ENCODE measurements at regions of chr2 and their contacts with region 1.

Region 1: DNA sequence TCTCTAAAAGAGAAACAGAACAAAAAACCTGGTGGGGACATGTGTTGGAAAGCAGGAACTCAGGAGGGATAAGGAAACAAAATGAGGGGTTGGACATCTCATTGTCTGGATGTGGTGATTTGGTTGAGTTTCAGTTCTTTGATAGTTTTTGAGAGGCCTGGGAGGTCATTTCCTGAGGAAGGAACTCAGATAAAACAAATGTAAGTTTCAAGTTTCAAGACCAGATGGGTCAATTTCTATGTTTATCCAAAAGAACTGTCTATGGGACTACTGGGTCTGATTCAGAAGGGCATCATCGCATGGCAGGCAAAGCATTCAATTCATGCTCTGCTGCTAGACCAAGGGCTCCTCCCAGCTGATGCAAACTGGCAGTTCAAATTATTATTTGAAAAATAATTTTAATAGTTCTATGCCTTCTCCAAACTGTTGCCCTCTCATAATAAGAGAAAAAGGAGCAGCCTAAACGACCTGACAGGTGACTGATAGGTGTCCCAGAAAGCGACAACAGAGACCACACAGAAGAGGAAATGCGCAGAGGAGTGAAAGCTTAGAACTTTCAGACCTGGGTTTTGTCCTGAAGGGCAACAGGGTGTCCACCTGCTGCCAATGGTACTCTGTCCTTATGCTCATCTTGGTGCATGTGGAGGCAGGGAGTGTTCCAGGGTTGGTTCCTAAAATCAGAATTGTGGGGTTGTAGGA is 39.3 kb upstream of the SH3RF3 start:
- DNase-seq: peak; percentile 55
- H3K4me3 ChIP-seq: no peak overlapping the region
- H3K27ac ChIP-seq: peak overlapping the region; percentile 39
- H3K4me1 ChIP-seq: peaks cover 18% of the 10 kb centered on the region
- H3K27me3 ChIP-seq: no peaks in the 10 kb centered on the region
- CTCF ChIP-seq: no peak
- POLR2A ChIP-seq: no peak

Region 2: GRCh38 chr2:109031476-109032228 is 58.1 kb before region 1 on chr2:
- CTCF ChIA-PET with region 1: no interaction called
- POLR2A ChIA-PET with region 1: no interaction called
- dilution Hi-C with region 1: no loop called
- intact Hi-C with region 1: loop called (anchors 5 kb)
- DNase-seq: peak; percentile 53
- H3K4me3 ChIP-seq: peak overlapping the region; percentile 33 to 66 (median 39)
- H3K27ac ChIP-seq: no peak overlapping the region
- H3K4me1 ChIP-seq: peaks cover 9% of the 10 kb centered on the region
- H3K27me3 ChIP-seq: peaks cover 0 to 2% of the 10 kb centered on the region in 2 experiments
- CTCF ChIP-seq: peak in 1 of 2 donors; percentile 32
- POLR2A ChIP-seq: no peak

Region 3: GRCh38 chr2:109637749-109638570 is 548.2 kb after region 1 on chr2:
- CTCF ChIA-PET with region 1: no interaction called
- POLR2A ChIA-PET with region 1: no interaction called
- dilution Hi-C with region 1: no loop called
- intact Hi-C with region 1: loop called (anchors 10 kb)
- DNase-seq: no peak
- H3K4me3 ChIP-seq: no peak overlapping the region
- H3K27ac ChIP-seq: no peak overlapping the region
- H3K4me1 ChIP-seq: no peaks in the 10 kb centered on the region
- H3K27me3 ChIP-seq: peaks cover 5% of the 10 kb centered on the region in 2 experiments
- CTCF ChIP-seq: no peak
- POLR2A ChIP-seq: no peak

Measured in endothelial cell of umbilical vein (primary cell).